ENCODE measurements at regions of chr1 and their contacts with region 1.

Region 1: GRCh38 chr1:150561974-150562445 is 12.8 kb downstream of the ADAMTSL4 start:
- DNase-seq: peak; percentile 92
- ATAC-seq: peak; percentile 54
- H3K4me3 Mint-ChIP-seq: peak overlapping the region; percentile 92
- H3K27ac Mint-ChIP-seq: peak overlapping the region; percentile 98
- H3K4me1 Mint-ChIP-seq: peaks cover 52% of the 10 kb centered on the region
- H3K27me3 Mint-ChIP-seq: no peaks in the 10 kb centered on the region
- CTCF ChIP-seq: no peak

Region 2: GRCh38 chr1:150429805-150430204 is 132.2 kb before region 1 on chr1:
- CTCF ChIA-PET with region 1: no interaction called
- POLR2A ChIA-PET with region 1: no interaction called
- DNase-seq: no peak
- ATAC-seq: no peak
- H3K4me3 Mint-ChIP-seq: no peak overlapping the region
- H3K27ac Mint-ChIP-seq: peak overlapping the region; percentile 30
- H3K4me1 Mint-ChIP-seq: peaks cover 5% of the 10 kb centered on the region
- H3K27me3 Mint-ChIP-seq: no peaks in the 10 kb centered on the region
- CTCF ChIP-seq: no peak

Region 3: DNA sequence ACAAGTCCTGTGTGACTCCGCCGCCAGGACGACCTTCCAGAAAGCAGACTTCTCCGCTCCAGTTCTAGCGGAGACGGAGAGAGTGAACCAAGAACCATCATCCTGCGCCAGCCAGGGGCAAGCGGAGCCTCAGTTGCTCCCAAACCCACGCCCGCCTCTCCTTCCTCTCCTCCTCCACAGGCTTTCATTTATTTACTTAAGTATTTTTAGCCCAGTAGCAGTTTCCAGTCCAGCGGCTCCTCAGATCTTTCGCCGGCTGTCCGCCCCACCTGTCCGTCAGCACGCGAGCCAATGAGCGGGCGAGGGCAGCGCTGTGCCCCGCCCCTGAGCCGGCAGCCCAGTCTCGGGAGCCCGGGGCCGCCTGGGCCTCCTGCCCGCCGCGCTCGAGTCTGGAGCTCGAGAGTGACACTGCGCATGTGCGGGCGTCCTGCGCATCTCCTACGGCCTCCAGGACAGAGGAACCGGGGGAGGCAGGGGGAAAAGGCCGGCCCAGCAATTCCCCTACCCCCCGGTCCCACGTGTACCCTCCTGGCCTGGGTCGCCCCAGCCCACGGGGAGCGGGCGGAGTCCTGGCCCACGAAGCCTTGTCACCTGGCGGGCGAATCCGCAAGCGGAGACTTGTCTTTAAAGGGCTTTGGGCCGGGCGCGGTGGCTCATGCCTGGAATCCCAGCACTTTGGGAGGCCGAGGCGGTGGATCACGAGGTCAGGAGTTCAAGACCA is 46.5 kb before region 1 on chr1 and contains the start of gene FALEC:
- CTCF ChIA-PET with region 1: interaction called, 32 read pairs
- POLR2A ChIA-PET with region 1: interaction called, 4 read pairs
- DNase-seq: peak; percentile 97
- ATAC-seq: peak; percentile 97
- H3K4me3 Mint-ChIP-seq: peak within 1 kb of the TSS; percentile 79
- H3K27ac Mint-ChIP-seq: peak within 1 kb of the TSS; percentile 91
- H3K4me1 Mint-ChIP-seq: peaks cover 12% of the 10 kb centered on the region
- H3K27me3 Mint-ChIP-seq: no peaks in the 10 kb centered on the region; the same call in 1 of the 2 replicates
- CTCF ChIP-seq: no peak
- total RNA-seq, gene FALEC: 0.71 to 1.2 TPM (median 1.0 TPM) in 3 replicates

Region 4: GRCh38 chr1:150548632-150549495 is 13.1 kb before region 1 on chr1 and contains the start of gene ADAMTSL4:
- CTCF ChIA-PET with region 1: interaction called, 97 read pairs
- POLR2A ChIA-PET with region 1: interaction called, 4 read pairs
- DNase-seq: peak; percentile 63
- ATAC-seq: peak; percentile 63
- H3K4me3 Mint-ChIP-seq: peak within 1 kb of the TSS; percentile 80
- H3K27ac Mint-ChIP-seq: no peak within 1 kb of the TSS
- H3K4me1 Mint-ChIP-seq: peaks cover 25% of the 10 kb centered on the region
- H3K27me3 Mint-ChIP-seq: peaks cover 43% of the 10 kb centered on the region
- CTCF ChIP-seq: no peak
- total RNA-seq, gene ADAMTSL4: 6.6 to 14.7 TPM (median 14.1 TPM) in 3 replicates

Region 5: DNA sequence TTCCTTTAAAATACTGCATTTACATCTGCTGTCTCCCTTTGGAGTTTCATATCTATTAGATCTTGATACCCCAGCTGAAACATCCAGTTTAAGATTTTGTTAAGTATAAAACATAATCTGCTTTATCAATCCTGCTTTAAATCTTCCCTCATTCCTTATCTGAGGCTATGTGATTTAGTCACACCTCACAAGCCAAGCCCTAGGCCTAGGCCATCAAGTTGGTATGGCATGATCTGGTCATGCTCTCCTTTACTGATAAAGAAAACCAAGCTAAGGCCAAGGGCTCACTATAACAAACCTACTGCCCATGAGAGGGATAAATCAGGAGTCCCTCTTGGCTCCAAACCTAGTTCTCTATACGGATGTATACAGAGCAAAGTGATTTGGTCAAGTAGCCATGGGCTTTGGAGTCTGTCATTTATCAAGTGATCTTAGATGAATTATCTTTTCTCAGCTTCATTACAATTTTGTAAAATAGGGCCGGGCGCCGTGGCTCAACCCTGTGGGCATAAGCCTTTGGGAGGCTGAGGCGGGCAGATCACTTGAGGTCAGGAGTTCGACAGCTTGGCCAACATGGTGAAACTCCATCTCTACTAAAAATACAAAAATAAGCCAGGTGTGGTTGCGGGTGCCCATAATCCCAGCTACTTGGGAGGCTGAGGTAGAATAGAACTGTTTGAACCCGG is 44.6 kb after region 1 on chr1:
- CTCF ChIA-PET with region 1: interaction called, 9 read pairs
- POLR2A ChIA-PET with region 1: interaction called, 14 read pairs
- DNase-seq: no peak
- ATAC-seq: no peak
- H3K4me3 Mint-ChIP-seq: no peak overlapping the region
- H3K27ac Mint-ChIP-seq: peak overlapping the region; percentile 90
- H3K4me1 Mint-ChIP-seq: peaks cover 42% of the 10 kb centered on the region
- H3K27me3 Mint-ChIP-seq: no peaks in the 10 kb centered on the region; the same call in 1 of the 2 replicates
- CTCF ChIP-seq: no peak

Region 6: GRCh38 chr1:150629115-150629928 is 67.3 kb after region 1 on chr1 and contains the start of gene ENSA:
- CTCF ChIA-PET with region 1: interaction called, 53 read pairs
- POLR2A ChIA-PET with region 1: interaction called, 10 read pairs
- DNase-seq: peak; percentile 95
- ATAC-seq: peak; percentile 94
- H3K4me3 Mint-ChIP-seq: no peak within 1 kb of the TSS
- H3K27ac Mint-ChIP-seq: no peak within 1 kb of the TSS
- H3K4me1 Mint-ChIP-seq: peaks cover 57% of the 10 kb centered on the region
- H3K27me3 Mint-ChIP-seq: no peaks in the 10 kb centered on the region
- CTCF ChIP-seq: no peak
- total RNA-seq, gene ENSA: 219 to 254 TPM (median 224 TPM) in 3 replicates

Measured in WTC11 (cell line).